ENCODE measurements at regions of chr3 and their contacts with region 1.

Region 1: GRCh38 chr3:40580494-40581091 is 55.8 kb downstream of the ZNF621 start:
- DNase-seq: peak; percentile 51 to 62
- ATAC-seq: peak in 7 of 8 donors; percentile 46 to 71 (median 57)
- H3K4me3 ChIP-seq: no peak overlapping the region
- H3K27ac ChIP-seq: no peak overlapping the region
- H3K4me1 ChIP-seq: peaks cover 0 to 29% (median 9%) of the 10 kb centered on the region in 9 donors
- H3K27me3 ChIP-seq: no peaks in the 10 kb centered on the region
- CTCF ChIP-seq: peak; percentile 89 to 97 (median 95)

Region 2: DNA sequence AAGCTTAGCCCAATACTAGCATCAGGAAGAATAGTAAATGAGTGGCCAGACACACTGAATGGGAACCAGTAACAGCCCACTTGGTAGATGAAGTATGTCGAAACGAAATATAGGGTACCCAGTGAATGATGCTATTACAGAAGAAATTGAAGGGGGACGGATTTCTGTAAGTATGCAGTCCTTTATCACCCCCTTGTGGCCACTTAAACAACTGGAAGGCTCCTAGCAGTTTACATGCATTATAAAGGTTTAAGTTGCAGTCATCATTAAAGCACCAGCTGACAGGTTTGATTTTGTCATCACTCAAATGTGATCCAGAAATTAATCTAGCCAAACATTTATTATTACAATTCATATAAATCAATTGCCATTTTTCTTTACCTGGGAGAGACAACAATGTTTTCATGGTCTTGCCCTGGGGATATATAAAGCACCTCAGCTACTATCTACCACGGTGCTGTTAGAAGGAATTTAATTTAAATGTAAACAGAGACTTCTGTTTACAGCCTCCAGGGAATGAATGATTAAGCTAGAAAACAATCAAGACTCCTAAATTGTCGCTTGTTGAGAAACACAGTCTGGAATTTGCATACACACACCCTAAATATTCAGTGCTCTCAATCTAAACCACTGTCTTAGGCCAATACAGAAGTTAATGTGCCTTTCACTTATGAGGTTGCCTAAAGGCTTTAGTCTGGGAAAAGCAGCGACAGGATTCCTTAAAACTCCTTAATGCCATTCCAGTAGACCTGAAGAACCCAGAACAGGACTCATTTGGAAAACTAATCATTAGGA is 263.3 kb before region 1 on chr3:
- intact Hi-C with region 1: loop called in 1 of 10 experiments (anchors 10 kb)
- DNase-seq: peak in 1 of 2 donors; percentile 52
- ATAC-seq: peak in 2 of 8 donors; percentile 29 to 34
- H3K4me3 ChIP-seq: no peak overlapping the region
- H3K27ac ChIP-seq: no peak overlapping the region
- H3K4me1 ChIP-seq: peaks cover 0 to 25% (median 20%) of the 10 kb centered on the region in 9 donors
- H3K27me3 ChIP-seq: no peaks in the 10 kb centered on the region
- CTCF ChIP-seq: peak; percentile 63 to 90 (median 82)

Region 3: GRCh38 chr3:40417845-40418543 is 162.6 kb before region 1 on chr3:
- intact Hi-C with region 1: no loop called
- DNase-seq: no peak
- ATAC-seq: no peak
- H3K4me3 ChIP-seq: no peak overlapping the region
- H3K27ac ChIP-seq: no peak overlapping the region
- H3K4me1 ChIP-seq: peaks cover 0 to 21% (median 9%) of the 10 kb centered on the region in 9 donors
- H3K27me3 ChIP-seq: no peaks in the 10 kb centered on the region
- CTCF ChIP-seq: no peak

Region 4: DNA sequence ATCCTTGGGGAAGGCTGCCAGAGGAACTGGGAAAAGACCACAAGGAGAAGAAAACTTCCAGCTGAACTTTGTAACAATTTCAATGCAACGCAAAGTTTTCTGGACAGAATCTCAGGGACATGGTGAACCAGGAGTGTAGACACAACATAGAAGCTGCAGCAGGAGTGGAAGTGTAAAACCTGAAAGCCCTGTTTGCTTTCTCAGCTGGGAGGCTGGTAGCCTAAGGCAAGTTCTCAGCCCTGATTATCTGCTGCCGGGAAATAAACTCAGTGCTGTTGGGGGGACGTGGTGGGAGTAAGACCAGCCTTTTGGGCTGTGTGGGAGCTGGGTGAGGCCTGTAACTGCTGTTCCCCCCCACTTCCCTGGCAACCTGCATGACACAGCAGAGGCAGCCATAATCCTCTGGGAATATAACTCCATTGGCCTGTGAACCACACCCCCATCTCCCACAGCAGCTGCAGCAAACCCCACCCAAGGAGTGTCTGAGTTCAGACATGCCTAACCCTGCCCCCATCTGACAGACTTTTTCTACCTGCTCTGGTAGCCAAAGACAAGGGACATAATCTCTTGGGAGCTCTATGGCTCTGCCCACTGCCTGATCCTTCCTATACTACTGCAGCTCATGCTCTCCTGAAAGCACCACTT is 50.9 kb after region 1 on chr3:
- intact Hi-C with region 1: no loop called
- DNase-seq: no peak
- ATAC-seq: no peak
- H3K4me3 ChIP-seq: no peak overlapping the region
- H3K27ac ChIP-seq: no peak overlapping the region
- H3K4me1 ChIP-seq: no peaks in the 10 kb centered on the region
- H3K27me3 ChIP-seq: no peaks in the 10 kb centered on the region
- CTCF ChIP-seq: no peak

Region 5: DNA sequence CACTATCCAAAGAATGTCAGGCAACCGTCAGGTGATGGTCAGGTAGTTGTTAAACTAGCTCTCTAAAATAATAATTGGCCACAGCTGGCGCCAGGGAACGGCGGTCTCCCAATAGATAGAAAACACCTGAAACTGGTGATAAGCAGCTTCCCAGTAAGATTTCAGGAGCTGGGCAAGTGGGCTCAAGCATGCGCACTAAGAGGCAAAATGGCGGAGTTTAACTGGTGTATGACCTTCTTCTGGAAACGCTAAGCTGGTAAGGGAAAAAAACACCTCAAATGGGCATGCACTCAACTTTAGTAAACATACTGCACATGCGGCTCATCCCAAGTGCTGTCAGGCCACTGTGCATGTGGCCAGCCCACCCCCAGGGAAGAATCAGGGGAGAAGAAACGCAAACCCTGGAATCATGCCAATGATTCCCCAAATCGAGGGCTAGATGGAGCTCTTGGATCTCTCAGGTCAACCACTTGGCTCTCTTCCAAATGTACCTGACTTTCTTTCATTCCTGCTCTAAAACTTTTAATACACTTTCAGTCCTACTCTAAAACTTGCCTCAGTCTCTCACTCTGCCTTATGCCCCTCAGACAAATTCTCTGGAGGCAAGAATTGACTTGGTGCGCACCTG is 139.2 kb after region 1 on chr3:
- intact Hi-C with region 1: loop called in 1 of 10 experiments (anchors 10 kb)
- DNase-seq: peak in 1 of 2 donors; percentile 29
- ATAC-seq: peak in 1 of 8 donors; percentile 35
- H3K4me3 ChIP-seq: no peak overlapping the region
- H3K27ac ChIP-seq: no peak overlapping the region
- H3K4me1 ChIP-seq: peaks cover 0 to 11% (median under 1%) of the 10 kb centered on the region in 9 donors
- H3K27me3 ChIP-seq: no peaks in the 10 kb centered on the region
- CTCF ChIP-seq: peak in 7 of 9 donors; percentile 30 to 66 (median 47)

Region 6: GRCh38 chr3:40847551-40847992 is 267.0 kb after region 1 on chr3:
- intact Hi-C with region 1: loop called in 2 of 10 experiments (anchors 10 kb)
- DNase-seq: peak in 1 of 2 donors; percentile 38
- ATAC-seq: peak; percentile 74 to 93 (median 89)
- H3K4me3 ChIP-seq: no peak overlapping the region
- H3K27ac ChIP-seq: no peak overlapping the region
- H3K4me1 ChIP-seq: peaks cover 0 to 28% (median 10%) of the 10 kb centered on the region in 9 donors
- H3K27me3 ChIP-seq: no peaks in the 10 kb centered on the region
- CTCF ChIP-seq: peak in 7 of 9 donors; percentile 27 to 64 (median 36)

Region 7: DNA sequence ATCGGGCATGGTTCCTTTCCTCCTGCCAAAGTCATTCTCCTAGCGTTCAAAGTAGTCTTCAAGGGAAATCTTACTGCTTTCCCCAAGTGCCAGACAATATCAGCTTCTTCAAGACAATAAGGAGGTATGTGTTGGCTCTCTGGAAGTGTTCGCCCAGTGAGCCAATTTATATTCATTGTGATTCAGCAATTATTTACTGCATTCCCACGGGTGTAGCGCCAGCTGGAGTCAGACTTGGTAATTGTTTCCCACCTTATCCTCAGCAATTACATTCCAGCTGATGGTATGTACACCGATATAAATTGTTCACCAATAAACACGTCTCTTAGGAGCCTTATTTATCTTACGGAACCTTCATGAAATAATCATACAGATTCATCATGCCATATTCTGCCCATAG is 515.1 kb after region 1 on chr3:
- intact Hi-C with region 1: loop called in 1 of 10 experiments (anchors 10 kb)
- DNase-seq: no peak
- ATAC-seq: no peak
- H3K4me3 ChIP-seq: no peak overlapping the region
- H3K27ac ChIP-seq: no peak overlapping the region
- H3K4me1 ChIP-seq: peaks cover 0 to 10% (median 0%) of the 10 kb centered on the region in 9 donors
- H3K27me3 ChIP-seq: no peaks in the 10 kb centered on the region
- CTCF ChIP-seq: no peak

Region 8: GRCh38 chr3:41701191-41701698 is 1120.7 kb after region 1 on chr3:
- intact Hi-C with region 1: loop called in 1 of 10 experiments (anchors 10 kb)
- DNase-seq: no peak
- ATAC-seq: no peak
- H3K4me3 ChIP-seq: no peak overlapping the region
- H3K27ac ChIP-seq: no peak overlapping the region
- H3K4me1 ChIP-seq: no peaks in the 10 kb centered on the region
- H3K27me3 ChIP-seq: no peaks in the 10 kb centered on the region
- CTCF ChIP-seq: no peak

Region 9: DNA sequence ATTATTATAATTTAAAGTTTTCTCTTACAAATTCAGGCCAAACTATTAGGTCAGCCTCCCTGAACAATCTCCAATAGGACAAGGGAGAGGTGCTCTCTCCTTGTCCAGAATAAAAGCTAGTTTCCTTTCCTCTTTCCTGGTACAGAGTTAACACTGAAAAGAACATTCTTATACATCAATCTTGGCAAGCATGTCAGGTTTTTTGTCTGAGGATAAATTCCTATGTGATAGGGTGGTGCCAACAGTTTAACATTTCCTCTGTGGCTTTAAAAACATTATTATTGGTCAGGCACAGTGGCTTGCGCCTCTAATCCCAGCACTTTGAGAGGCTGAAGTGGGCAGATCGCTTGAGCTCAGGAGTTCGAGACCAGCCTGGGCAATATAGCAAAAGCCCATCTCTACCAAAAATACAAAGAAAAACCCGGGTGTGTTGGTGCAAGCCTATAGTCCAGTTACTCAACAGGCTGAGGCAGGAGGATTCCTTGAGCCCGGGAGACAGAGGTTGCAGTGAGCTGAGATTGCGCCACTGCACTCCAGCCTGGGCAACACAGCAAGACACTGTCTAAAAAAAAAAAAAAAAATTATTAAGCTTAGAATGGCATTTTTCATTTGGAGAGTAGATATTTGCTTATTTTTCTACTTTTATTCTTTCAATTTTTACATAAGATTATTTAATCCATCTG is 1395.0 kb after region 1 on chr3:
- intact Hi-C with region 1: no loop called
- DNase-seq: no peak
- ATAC-seq: no peak
- H3K4me3 ChIP-seq: no peak overlapping the region
- H3K27ac ChIP-seq: no peak overlapping the region
- H3K4me1 ChIP-seq: peaks cover 0 to 9% (median 0%) of the 10 kb centered on the region in 9 donors
- H3K27me3 ChIP-seq: no peaks in the 10 kb centered on the region
- CTCF ChIP-seq: no peak